HEK293 (cell line): ENCODE measurements at regions of chr12 and their contacts with region 1.

Region 1: GRCh38 chr12:41663598-41664258 is 475.6 kb downstream of the PDZRN4 start:
- H3K4me3 ChIP-seq: no peak overlapping the region
- H3K27ac ChIP-seq: no peak overlapping the region
- H3K4me1 ChIP-seq: no peaks in the 10 kb centered on the region
- CTCF ChIP-seq: no peak

Region 2: DNA sequence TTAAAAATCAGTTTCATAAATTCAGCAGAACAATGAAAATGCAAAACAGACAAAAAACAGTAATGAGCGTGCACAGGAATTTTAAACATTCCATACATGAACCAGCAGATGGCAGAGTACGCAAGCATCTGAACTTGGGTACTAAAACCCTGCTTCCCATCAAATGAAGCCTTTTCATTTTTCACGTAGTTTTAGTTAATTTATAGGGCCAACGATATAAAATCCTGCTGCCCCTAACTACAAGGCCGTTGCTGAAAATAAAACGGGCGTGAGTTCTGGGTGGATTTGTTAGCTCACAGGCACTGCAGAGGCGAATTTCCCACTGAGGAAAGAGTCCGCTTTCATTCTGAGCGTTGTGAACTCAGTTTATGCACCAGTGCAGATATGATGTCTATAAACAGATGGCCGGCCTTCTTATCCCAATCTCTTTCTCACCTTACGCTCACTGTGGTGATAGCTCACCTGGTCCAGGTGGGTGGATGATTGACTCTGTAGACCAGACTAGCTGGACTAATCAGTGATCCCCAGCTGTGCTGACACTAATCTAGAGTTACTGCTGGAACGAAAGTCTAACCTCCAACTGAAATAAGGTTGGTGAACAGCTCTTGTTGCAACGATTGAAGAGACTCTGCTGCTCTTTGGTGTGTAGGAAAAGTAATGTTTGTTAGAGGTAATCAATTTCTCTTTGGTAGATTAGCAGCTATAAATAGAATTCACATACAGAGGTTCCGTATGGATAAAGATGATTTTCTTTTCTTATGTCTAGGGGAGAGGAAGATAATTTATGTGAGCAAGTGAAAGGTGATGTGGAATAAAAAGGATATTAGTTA is 386.4 kb before region 1 on chr12:
- CTCF ChIA-PET with region 1: interaction called, 20 read pairs
- POLR2A ChIA-PET with region 1: no interaction called
- H3K4me3 ChIP-seq: no peak overlapping the region
- H3K27ac ChIP-seq: no peak overlapping the region
- H3K4me1 ChIP-seq: no peaks in the 10 kb centered on the region
- CTCF ChIP-seq: peak; percentile 65; the same call in 1 of the 2 replicates